K562 (cell line): ENCODE measurements at regions of chr4 and their contacts with region 1.

Region 1: DNA sequence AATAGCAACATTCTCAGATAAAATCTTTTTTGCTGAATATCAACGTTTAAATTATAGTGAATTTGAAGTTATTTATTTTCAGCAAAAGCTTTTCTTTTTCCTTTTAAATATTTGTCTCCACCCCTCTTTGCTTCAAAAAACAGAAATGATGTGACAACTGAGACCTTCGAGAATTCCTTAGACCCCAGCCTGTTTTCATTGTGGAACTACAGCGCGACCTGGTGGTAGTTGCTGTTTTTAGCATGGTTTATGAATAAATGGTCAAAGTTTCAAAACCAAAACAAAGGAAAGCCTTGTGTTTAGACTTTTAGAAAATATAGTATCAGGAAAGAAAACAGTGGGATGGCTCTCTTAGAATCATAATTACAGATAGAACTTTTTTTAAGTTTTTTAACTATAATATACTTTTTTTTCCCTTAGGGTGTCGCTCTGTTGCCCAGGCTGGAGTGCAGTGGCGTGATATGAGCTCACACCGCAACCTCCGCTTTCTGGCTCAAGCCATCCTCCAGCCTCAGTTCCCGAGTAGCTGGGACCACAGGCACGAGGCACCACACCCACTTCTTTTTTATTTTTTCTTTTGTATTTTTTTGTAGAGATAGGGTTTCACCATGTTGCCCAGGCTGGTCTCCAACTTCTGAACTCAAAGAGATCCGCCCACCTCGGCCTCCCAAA is 26.8 kb upstream of the TMEM184C start:
- DNase-seq: peak; percentile 43 to 61 (median 48)
- ATAC-seq: peak; percentile 87
- H3K4me3 ChIP-seq: no peak overlapping the region
- H3K27ac ChIP-seq: no peak overlapping the region
- H3K4me1 ChIP-seq: no peaks in the 10 kb centered on the region
- H3K27me3 ChIP-seq: no peaks in the 10 kb centered on the region
- CTCF ChIP-seq: peak; percentile 63 to 80 (median 70)
- EP300 ChIP-seq: no peak
- POLR2A ChIP-seq: no peak
- RAD21 ChIP-seq: peak; percentile 74 to 83

Region 2: GRCh38 chr4:147019061-147019460 is 571.3 kb before region 1 on chr4:
- CTCF ChIA-PET with region 1: interaction called, 4 read pairs
- POLR2A ChIA-PET with region 1: no interaction called
- in situ Hi-C with region 1: loop called (anchors 25 kb)
- intact Hi-C with region 1: loop called (anchors 1 kb)
- DNase-seq: peak; percentile 43 to 68 (median 55)
- ATAC-seq: peak; percentile 91
- H3K4me3 ChIP-seq: no peak overlapping the region
- H3K27ac ChIP-seq: no peak overlapping the region
- H3K4me1 ChIP-seq: no peaks in the 10 kb centered on the region
- H3K27me3 ChIP-seq: no peaks in the 10 kb centered on the region
- CTCF ChIP-seq: peak; percentile 64 to 72 (median 68)
- EP300 ChIP-seq: no peak
- POLR2A ChIP-seq: no peak
- RAD21 ChIP-seq: peak; percentile 58 to 70

Region 3: DNA sequence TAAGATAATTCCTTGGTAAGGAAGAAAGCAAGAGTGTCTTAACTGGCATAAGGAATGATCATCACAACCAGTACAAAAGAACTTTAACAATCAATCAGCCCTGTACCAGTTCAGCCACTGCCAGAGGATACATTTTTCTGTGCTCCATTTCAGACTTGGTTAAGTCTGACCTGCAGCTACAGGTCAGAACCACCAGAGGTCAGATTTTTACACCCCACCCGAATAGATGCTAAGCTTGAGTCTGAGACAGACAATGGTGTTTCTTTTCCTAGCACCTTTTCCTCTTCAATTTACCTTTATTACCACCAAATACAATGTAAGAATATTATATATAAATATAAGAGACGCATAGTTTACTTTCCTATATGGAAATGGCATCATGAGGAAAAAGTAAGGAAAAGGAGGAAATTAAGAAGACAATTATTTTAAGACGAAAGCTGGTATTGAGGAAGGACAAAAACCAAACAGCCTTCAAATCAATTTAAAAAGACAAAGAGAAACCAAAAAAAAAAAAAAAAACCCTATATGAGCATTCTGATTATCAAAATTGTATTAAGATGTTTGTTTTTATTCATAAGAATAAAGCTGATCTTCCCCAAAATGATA is 429.4 kb before region 1 on chr4:
- CTCF ChIA-PET with region 1: interaction called, 3 read pairs
- POLR2A ChIA-PET with region 1: no interaction called
- in situ Hi-C with region 1: loop called (anchors 10 kb)
- intact Hi-C with region 1: loop called (anchors 1 kb)
- DNase-seq: peak; percentile 43 to 53 (median 52)
- ATAC-seq: peak; percentile 88
- H3K4me3 ChIP-seq: no peak overlapping the region
- H3K27ac ChIP-seq: no peak overlapping the region
- H3K4me1 ChIP-seq: peaks cover 0 to 4% of the 10 kb centered on the region in 2 experiments; a peak in 1 of 5 replicates
- H3K27me3 ChIP-seq: peaks cover 0 to 6% of the 10 kb centered on the region in 2 experiments; a peak in 1 of 5 replicates
- CTCF ChIP-seq: peak; percentile 64 to 68 (median 64)
- EP300 ChIP-seq: no peak
- POLR2A ChIP-seq: no peak
- RAD21 ChIP-seq: peak; percentile 48 to 54

Region 4: GRCh38 chr4:147518846-147519767 is 71.3 kb before region 1 on chr4:
- CTCF ChIA-PET with region 1: interaction called, 4 read pairs
- POLR2A ChIA-PET with region 1: no interaction called
- in situ Hi-C with region 1: no loop called
- intact Hi-C with region 1: loop called (anchors 1 kb)
- DNase-seq: peak; percentile 31 to 55 (median 34)
- ATAC-seq: peak; percentile 88
- H3K4me3 ChIP-seq: no peak overlapping the region
- H3K27ac ChIP-seq: no peak overlapping the region
- H3K4me1 ChIP-seq: no peaks in the 10 kb centered on the region
- H3K27me3 ChIP-seq: no peaks in the 10 kb centered on the region
- CTCF ChIP-seq: peak; percentile 71 to 75 (median 71)
- EP300 ChIP-seq: no peak
- POLR2A ChIP-seq: no peak
- RAD21 ChIP-seq: peak; percentile 23 to 66; a peak in 3 of 4 replicates

Region 5: GRCh38 chr4:147530723-147531122 is 59.7 kb before region 1 on chr4:
- CTCF ChIA-PET with region 1: no interaction called
- POLR2A ChIA-PET with region 1: no interaction called
- in situ Hi-C with region 1: no loop called
- intact Hi-C with region 1: no loop called
- DNase-seq: no peak
- ATAC-seq: no peak
- H3K4me3 ChIP-seq: no peak overlapping the region
- H3K27ac ChIP-seq: no peak overlapping the region
- H3K4me1 ChIP-seq: no peaks in the 10 kb centered on the region
- H3K27me3 ChIP-seq: no peaks in the 10 kb centered on the region
- CTCF ChIP-seq: no peak
- EP300 ChIP-seq: no peak
- POLR2A ChIP-seq: no peak
- RAD21 ChIP-seq: no peak